Ovary (tissue), 10 donors: ENCODE measurements at regions of chr4 and their contacts with region 1.

Region 1: GRCh38 chr4:24794916-24795665 is at the start of gene SOD3:
- DNase-seq: peak; percentile 69 to 80 (median 75)
- H3K4me3 ChIP-seq: peak within 1 kb of the TSS; percentile 28
- H3K27ac ChIP-seq: peak within 1 kb of the TSS; percentile 53 to 70
- H3K4me1 ChIP-seq: peaks cover 13% of the 10 kb centered on the region
- H3K27me3 ChIP-seq: no peaks in the 10 kb centered on the region
- CTCF ChIP-seq: no peak
- EP300 ChIP-seq: no peak
- POLR2A ChIP-seq: peak; percentile 42
- total RNA-seq, gene SOD3: 15.3 to 92.3 (median 33.0) TPM

Region 2: GRCh38 chr4:24472514-24473308 is 322.4 kb before region 1 on chr4:
- intact Hi-C with region 1: no loop called
- DNase-seq: peak; percentile 81 to 91 (median 85)
- H3K4me3 ChIP-seq: peak overlapping the region; percentile 57
- H3K27ac ChIP-seq: peak overlapping the region; percentile 12 to 39
- H3K4me1 ChIP-seq: peaks cover 5% of the 10 kb centered on the region
- H3K27me3 ChIP-seq: no peaks in the 10 kb centered on the region
- CTCF ChIP-seq: peak; percentile 14 to 70 (median 61)
- EP300 ChIP-seq: no peak
- POLR2A ChIP-seq: peak; percentile 12

Region 3: GRCh38 chr4:24584175-24584850 is 210.8 kb before region 1 on chr4 and contains the start of gene DHX15:
- intact Hi-C with region 1: loop called in 2 of 4 experiments (anchors 10 kb)
- DNase-seq: peak; percentile 93 to 97 (median 95)
- H3K4me3 ChIP-seq: peak within 1 kb of the TSS; percentile 92
- H3K27ac ChIP-seq: peak within 1 kb of the TSS; percentile 96 to 98
- H3K4me1 ChIP-seq: peaks cover 3% of the 10 kb centered on the region
- H3K27me3 ChIP-seq: no peaks in the 10 kb centered on the region
- CTCF ChIP-seq: peak in 1 of 3 donors; percentile 23
- EP300 ChIP-seq: no peak
- POLR2A ChIP-seq: peak; percentile 79
- total RNA-seq, gene DHX15: 93.7 to 129 (median 107) TPM